ENCODE measurements at regions of chr19 and their contacts with region 1.

Region 1: GRCh38 chr19:16897154-16897855 is 8.5 kb downstream of the F2RL3 start:
- DNase-seq: peak; percentile 86
- H3K4me3 ChIP-seq: peak overlapping the region; percentile 62 to 88 (median 67)
- H3K27ac ChIP-seq: no peak overlapping the region
- H3K4me1 ChIP-seq: peaks cover 13% of the 10 kb centered on the region
- H3K27me3 ChIP-seq: no peaks in the 10 kb centered on the region
- CTCF ChIP-seq: no peak

Region 2: DNA sequence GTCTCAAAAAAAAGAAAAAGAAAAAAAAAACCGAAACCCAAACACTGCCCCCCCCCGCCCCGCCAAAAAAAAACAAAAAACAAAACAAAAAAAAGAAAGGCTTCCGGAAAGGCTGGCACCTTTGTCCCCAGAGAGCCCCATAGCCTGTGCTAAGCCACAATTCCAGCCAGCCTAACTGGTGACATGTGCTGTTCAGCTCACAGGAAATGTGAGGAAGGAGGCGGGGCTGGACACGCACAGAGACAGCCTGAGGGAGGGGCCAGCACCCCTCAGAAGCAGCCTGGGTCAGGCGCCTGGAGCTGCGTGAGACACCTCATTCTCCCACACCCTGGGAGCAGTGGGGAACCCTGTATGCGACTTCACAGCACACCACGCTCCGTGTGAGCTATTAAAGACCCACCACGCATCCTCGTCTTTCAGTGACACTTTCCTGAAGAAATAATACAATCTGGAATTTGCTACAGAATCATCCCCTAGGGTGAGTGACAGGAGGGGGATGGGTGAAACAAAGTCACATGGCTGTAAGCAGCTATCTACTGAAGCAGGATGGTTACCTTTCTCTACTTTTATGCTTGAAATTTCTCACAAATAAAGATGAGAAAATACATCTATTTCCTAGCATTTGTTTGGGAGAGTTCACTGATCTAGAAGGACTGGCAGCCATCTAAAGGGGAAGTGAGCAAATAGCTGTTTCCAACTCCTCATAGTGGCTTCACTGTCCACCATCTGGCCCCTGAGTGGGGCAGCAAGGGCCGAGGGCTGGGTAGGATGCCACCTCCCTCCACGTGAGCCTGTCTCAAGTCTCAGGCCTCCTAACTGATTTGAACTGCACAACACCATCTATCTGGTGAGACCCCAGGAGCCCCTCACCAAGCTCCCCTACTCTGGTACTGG is 312.8 kb before region 1 on chr19:
- CTCF ChIA-PET with region 1: no interaction called
- dilution Hi-C with region 1: no loop called
- in situ Hi-C with region 1: no loop called
- intact Hi-C with region 1: loop called (anchors 10 kb)
- DNase-seq: peak; percentile 75
- H3K4me3 ChIP-seq: no peak overlapping the region
- H3K27ac ChIP-seq: no peak overlapping the region
- H3K4me1 ChIP-seq: peaks cover 74% of the 10 kb centered on the region
- H3K27me3 ChIP-seq: no peaks in the 10 kb centered on the region
- CTCF ChIP-seq: no peak

Region 3: GRCh38 chr19:16771618-16772017 is 125.7 kb before region 1 on chr19:
- CTCF ChIA-PET with region 1: no interaction called
- dilution Hi-C with region 1: no loop called
- in situ Hi-C with region 1: loop called in 1 of 2 experiments (anchors 10 kb)
- intact Hi-C with region 1: loop called (anchors 2 kb)
- DNase-seq: peak; percentile 55
- H3K4me3 ChIP-seq: no peak overlapping the region
- H3K27ac ChIP-seq: no peak overlapping the region
- H3K4me1 ChIP-seq: peaks cover 3% of the 10 kb centered on the region
- H3K27me3 ChIP-seq: no peaks in the 10 kb centered on the region
- CTCF ChIP-seq: peak; percentile 81 to 86

Region 4: DNA sequence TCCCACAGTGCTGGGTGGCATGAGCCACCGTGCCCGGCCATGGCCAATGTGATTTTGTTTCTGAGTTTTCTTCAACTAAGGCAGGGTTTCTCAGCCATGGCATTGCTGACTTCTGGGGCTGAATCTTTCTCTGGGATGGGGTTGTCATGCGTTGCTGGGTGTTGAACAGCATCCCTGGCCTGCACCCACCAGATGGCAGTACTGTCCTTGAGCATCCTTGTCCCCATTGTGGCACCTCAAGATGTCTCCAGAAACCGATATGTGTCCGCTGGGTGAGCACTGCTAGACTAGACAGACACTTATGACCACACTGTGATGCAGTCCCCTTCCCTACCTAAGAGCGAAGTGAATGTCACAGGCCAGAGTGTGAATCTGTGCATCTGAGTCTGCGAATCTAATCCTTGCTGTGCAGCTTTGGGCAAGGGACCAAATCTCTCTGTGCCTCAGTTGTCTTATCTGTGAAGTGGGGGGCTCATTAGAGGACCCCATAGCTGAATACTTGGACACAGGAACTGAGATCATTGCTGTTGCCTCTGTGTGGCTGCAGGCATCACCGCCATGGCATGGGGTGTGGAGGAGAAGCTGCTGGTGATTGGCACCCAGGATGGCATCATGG is 118.4 kb before region 1 on chr19:
- CTCF ChIA-PET with region 1: no interaction called
- dilution Hi-C with region 1: no loop called
- in situ Hi-C with region 1: loop called in 1 of 2 experiments (anchors 10 kb)
- intact Hi-C with region 1: loop called (anchors 1 kb)
- DNase-seq: peak; percentile 40
- H3K4me3 ChIP-seq: no peak overlapping the region
- H3K27ac ChIP-seq: no peak overlapping the region
- H3K4me1 ChIP-seq: no peaks in the 10 kb centered on the region
- H3K27me3 ChIP-seq: no peaks in the 10 kb centered on the region
- CTCF ChIP-seq: peak; percentile 58 to 87

Region 5: DNA sequence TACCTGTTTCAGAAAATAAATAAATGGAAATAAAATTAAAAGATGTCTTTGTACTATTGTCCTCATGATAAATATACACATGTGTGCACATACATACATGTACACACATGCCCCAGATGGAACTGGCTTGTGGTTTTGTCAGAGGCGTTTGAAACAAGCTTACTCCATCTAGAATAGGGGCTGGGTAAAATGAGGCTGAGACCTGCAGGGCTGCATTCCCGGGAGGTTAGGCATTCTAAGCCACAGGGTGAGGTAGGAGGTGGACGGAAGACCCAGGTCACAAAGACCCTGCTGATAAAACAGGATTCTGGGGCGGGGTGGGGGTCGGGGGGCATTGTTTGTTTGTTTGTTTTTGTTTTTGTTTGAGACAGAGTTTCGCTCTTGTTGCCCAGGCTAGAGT is 76.2 kb before region 1 on chr19:
- CTCF ChIA-PET with region 1: no interaction called
- dilution Hi-C with region 1: no loop called
- in situ Hi-C with region 1: no loop called
- intact Hi-C with region 1: loop called (anchors 5 kb)
- DNase-seq: peak; percentile 75
- H3K4me3 ChIP-seq: no peak overlapping the region
- H3K27ac ChIP-seq: peak overlapping the region; percentile 32
- H3K4me1 ChIP-seq: peaks cover 31% of the 10 kb centered on the region
- H3K27me3 ChIP-seq: no peaks in the 10 kb centered on the region
- CTCF ChIP-seq: no peak

Region 6: GRCh38 chr19:16849177-16849576 is 48.1 kb before region 1 on chr19:
- CTCF ChIA-PET with region 1: no interaction called
- dilution Hi-C with region 1: loop called (anchors 10 kb)
- in situ Hi-C with region 1: no loop called
- intact Hi-C with region 1: no loop called
- DNase-seq: no peak
- H3K4me3 ChIP-seq: no peak overlapping the region
- H3K27ac ChIP-seq: no peak overlapping the region
- H3K4me1 ChIP-seq: no peaks in the 10 kb centered on the region
- H3K27me3 ChIP-seq: no peaks in the 10 kb centered on the region
- CTCF ChIP-seq: no peak

Region 7: GRCh38 chr19:16886231-16886880 is 10.9 kb before region 1 on chr19:
- CTCF ChIA-PET with region 1: no interaction called
- dilution Hi-C with region 1: no loop called
- in situ Hi-C with region 1: no loop called
- intact Hi-C with region 1: no loop called
- DNase-seq: no peak
- H3K4me3 ChIP-seq: no peak overlapping the region
- H3K27ac ChIP-seq: no peak overlapping the region
- H3K4me1 ChIP-seq: peaks cover 21% of the 10 kb centered on the region
- H3K27me3 ChIP-seq: no peaks in the 10 kb centered on the region
- CTCF ChIP-seq: no peak

Region 8: DNA sequence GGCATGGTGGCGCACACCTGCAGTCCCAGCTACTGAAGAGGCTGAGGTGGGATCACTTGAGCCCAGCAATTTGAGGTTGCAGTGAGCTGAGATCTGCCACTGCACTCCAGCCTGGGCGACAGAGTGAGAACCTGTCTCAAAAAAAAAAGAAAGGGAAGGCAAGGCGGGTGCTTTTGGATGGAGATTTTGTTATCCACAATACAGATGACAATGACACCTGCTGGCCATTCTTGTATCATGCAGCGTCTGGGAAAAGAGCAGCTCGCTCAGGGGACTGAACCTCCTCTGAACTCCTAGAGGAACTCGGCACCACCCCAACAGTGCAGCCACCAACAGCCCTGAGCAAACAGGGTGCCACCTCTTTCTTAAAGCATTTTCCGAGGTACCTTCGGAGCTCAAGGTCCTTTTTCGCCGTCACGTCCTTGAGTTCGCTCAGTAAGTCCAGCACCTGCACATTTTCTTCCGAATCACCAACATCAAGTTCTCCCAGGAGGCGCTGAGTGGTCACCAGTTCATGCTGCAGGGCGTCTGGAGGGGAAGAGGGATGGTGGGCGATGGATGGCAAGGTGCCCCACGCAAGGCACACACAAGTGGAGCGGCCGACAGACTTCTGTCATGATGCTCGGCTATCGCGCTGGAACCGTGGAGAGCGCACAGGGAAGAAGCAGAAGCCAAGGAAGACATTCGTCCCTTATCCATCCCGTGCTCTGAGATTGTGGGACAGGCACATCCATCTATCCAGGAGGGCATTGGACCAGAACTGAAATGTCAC is 155.3 kb after region 1 on chr19:
- CTCF ChIA-PET with region 1: no interaction called
- dilution Hi-C with region 1: no loop called
- in situ Hi-C with region 1: no loop called
- intact Hi-C with region 1: loop called (anchors 1 kb)
- DNase-seq: peak; percentile 34
- H3K4me3 ChIP-seq: no peak overlapping the region
- H3K27ac ChIP-seq: no peak overlapping the region
- H3K4me1 ChIP-seq: no peaks in the 10 kb centered on the region
- H3K27me3 ChIP-seq: no peaks in the 10 kb centered on the region
- CTCF ChIP-seq: peak; percentile 49 to 71

Region 9: DNA sequence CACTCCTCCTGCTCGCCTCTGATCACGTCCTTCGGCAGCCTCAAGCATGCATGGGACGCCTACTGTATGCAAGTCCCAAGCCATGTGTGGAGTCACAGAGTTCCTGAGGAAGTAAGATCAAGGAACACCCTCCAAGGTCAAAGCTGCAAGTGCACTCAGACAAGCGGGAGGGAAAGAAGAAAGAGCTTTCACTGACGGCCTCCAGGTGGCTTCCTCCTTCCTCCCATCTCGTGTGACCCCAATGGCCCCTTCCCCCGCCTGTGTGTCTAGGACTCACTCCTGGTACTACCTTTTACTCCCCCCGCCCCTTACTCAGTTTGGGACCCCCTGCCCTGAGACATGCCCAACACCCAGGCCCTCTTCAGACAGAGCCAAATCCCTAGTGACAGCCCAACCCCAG is 171.9 kb after region 1 on chr19:
- CTCF ChIA-PET with region 1: no interaction called
- dilution Hi-C with region 1: no loop called
- in situ Hi-C with region 1: no loop called
- intact Hi-C with region 1: no loop called
- DNase-seq: no peak
- H3K4me3 ChIP-seq: no peak overlapping the region
- H3K27ac ChIP-seq: no peak overlapping the region
- H3K4me1 ChIP-seq: peaks cover 10% of the 10 kb centered on the region
- H3K27me3 ChIP-seq: no peaks in the 10 kb centered on the region
- CTCF ChIP-seq: no peak

Measured in mammary epithelial cell (primary cell).